Activated CD4-positive, alpha-beta memory T cell treated with anti-CD3 and anti-CD28 coated beads for 36 hours (primary cell): ENCODE measurements at regions of chr1 and their contacts with region 1.

Region 1: DNA sequence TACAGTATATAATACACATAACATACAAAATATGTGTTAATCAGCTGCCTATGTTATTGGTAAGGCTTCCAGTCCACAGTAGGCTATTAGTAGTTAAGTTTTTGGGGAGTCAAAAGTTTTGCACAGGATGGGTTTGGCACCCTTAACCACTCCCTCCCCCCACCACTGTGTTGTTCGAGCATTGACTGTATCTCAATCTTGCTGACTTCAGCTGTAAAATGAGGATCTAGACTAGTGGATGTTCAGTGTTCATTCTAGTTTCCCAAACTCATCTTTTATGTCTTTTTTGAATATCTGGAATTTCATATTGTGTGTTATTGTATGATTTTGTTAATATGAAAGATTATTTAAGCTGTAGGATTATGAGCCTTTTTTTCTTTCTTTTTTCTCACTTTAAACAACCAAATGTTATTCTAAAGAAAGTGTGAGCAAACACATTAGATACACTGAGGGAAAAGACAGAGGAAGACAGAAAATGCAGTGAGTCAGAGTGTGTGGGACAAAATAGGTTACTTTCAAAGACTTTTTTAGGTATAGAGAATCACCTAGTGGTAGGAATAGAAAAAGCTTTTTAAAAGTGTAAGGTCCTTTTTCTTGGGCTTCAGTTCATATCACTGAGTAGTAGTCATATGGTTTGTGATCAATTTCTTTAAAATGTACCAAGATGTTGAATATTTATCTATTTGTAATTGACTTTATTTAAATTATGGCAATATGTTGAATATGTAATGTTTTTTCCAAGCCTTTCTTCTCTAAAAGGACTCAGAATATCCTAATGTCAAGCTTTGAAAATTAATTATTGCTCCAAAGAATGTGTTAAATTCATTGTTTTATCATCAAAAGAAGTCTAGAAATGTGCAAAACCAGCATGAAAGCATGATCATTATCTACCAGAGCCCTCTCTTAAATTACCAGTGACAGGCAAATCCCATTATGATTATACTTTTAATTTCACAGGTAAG is 17.9 kb upstream of the CENPF start:
- DNase-seq: no peak
- H3K4me3 Mint-ChIP-seq: no peak overlapping the region
- H3K27ac Mint-ChIP-seq: no peak overlapping the region
- H3K4me1 Mint-ChIP-seq: no peaks in the 10 kb centered on the region
- H3K27me3 Mint-ChIP-seq: peaks cover 7% of the 10 kb centered on the region

Region 2: GRCh38 chr1:214213136-214213535 is 371.9 kb before region 1 on chr1:
- CTCF ChIA-PET with region 1: interaction called, 6 read pairs
- POLR2A ChIA-PET with region 1: no interaction called
- intact Hi-C with region 1: loop called (anchors 1 kb)
- DNase-seq: no peak
- H3K4me3 Mint-ChIP-seq: no peak overlapping the region
- H3K27ac Mint-ChIP-seq: no peak overlapping the region
- H3K4me1 Mint-ChIP-seq: peaks cover 1% of the 10 kb centered on the region
- H3K27me3 Mint-ChIP-seq: peaks cover 9% of the 10 kb centered on the region

Region 3: GRCh38 chr1:214386747-214387146 is 198.3 kb before region 1 on chr1:
- CTCF ChIA-PET with region 1: interaction called, 12 read pairs
- POLR2A ChIA-PET with region 1: no interaction called
- intact Hi-C with region 1: loop called (anchors 1 kb)
- DNase-seq: peak; percentile 15
- H3K4me3 Mint-ChIP-seq: no peak overlapping the region
- H3K27ac Mint-ChIP-seq: no peak overlapping the region
- H3K4me1 Mint-ChIP-seq: peaks cover 2% of the 10 kb centered on the region
- H3K27me3 Mint-ChIP-seq: no peaks in the 10 kb centered on the region

Region 4: GRCh38 chr1:214632091-214632490 is 47.0 kb after region 1 on chr1:
- CTCF ChIA-PET with region 1: interaction called, 10 read pairs
- POLR2A ChIA-PET with region 1: no interaction called
- intact Hi-C with region 1: no loop called
- DNase-seq: peak; percentile 23
- H3K4me3 Mint-ChIP-seq: no peak overlapping the region
- H3K27ac Mint-ChIP-seq: no peak overlapping the region
- H3K4me1 Mint-ChIP-seq: peaks cover 20% of the 10 kb centered on the region
- H3K27me3 Mint-ChIP-seq: no peaks in the 10 kb centered on the region